Heart left ventricle (tissue), 16 donors: ENCODE measurements at regions of chr12 and their contacts with region 1.

Region 1: DNA sequence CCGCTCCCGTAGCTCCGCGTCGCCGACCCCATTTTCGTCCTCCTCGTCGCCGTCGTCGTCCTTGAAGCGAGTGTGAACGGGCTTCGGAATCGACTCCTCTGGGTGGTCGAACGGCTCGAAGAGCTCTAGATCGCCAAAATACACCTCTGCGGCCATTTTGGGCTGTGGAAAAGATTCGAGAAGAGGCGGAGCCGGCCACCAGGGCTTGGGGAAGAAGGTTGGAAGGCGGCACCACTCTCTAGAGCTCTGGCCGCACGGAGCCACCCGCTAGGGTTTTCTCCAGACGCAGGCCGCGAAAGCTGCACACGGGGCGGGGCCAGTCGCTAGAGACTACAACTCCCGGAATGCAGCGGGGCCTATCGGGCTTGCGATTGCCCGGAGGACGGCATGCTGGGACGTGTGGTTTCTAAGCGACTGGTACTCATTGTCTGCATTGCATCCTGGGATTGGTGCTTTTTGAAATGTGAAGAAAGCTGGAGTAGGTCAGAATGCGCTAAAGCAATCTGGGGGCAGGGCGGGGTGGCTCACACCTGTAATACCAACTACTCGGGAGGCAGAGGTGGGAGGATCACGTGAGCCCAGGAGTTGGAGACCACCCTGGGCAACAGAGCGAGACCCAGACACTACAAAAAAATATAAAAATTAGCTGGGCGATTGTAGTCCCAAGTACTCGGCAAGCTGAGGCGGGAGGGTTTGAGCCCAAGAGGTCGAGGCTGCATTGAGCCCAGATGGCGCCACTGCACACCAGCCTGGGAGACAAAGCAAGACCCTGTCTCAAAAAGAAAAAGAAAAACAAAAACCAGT is at the start of gene ZCCHC8:
- DNase-seq: peak; percentile 96 to 98 (median 97)
- ATAC-seq: peak; percentile 98 to 100 (median 98)
- H3K4me3 ChIP-seq: peak within 1 kb of the TSS; percentile 17 to 95 (median 78)
- H3K27ac ChIP-seq: peak within 1 kb of the TSS; percentile 84 to 100 (median 96)
- H3K4me1 ChIP-seq: peaks cover 0 to 36% (median 28%) of the 10 kb centered on the region in 12 donors
- H3K27me3 ChIP-seq: no peaks in the 10 kb centered on the region
- CTCF ChIP-seq: no peak
- POLR2A ChIP-seq: peak; percentile 67 to 94
- total RNA-seq, gene ZCCHC8: 6.4 to 14.3 (median 8.0) TPM

Region 2: DNA sequence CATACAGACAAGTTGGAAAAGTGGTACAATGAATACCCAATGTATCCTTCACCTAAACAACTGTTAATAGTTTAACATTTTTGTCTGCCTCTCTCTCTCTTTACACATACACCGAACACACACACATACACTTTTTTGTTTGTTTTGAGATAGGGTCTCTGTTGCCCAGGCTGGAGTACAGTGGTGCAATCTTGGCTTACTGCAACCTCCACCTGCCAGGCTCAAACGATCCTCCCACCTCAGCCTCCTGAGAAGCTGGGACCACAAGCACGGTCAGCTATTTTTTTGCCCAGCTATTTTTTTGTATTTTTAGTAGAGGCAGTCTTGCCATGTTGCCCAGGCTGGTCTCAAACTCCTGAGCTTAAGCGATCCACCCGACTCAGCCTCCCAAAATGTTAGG is 16.9 kb before region 1 on chr12:
- intact Hi-C with region 1: loop called in 1 of 10 experiments (anchors 2 kb)
- DNase-seq: no peak
- ATAC-seq: no peak
- H3K4me3 ChIP-seq: no peak overlapping the region
- H3K27ac ChIP-seq: no peak overlapping the region
- H3K4me1 ChIP-seq: no peaks in the 10 kb centered on the region
- H3K27me3 ChIP-seq: no peaks in the 10 kb centered on the region
- CTCF ChIP-seq: no peak
- POLR2A ChIP-seq: no peak

Region 3: GRCh38 chr12:122526683-122527477 is 26.0 kb after region 1 on chr12 and contains the starts of genes KNTC1 and RSRC2:
- intact Hi-C with region 1: loop called in 4 of 10 experiments (anchors 1 to 2 kb)
- DNase-seq: peak; percentile 96 to 99 (median 99)
- ATAC-seq: peak; percentile 96 to 99 (median 98)
- H3K4me3 ChIP-seq: peak within 1 kb of the TSS; percentile 56 to 92 (median 78)
- H3K27ac ChIP-seq: peak within 1 kb of the TSS; percentile 91 to 100 (median 98)
- H3K4me1 ChIP-seq: peaks cover 12 to 47% (median 41%) of the 10 kb centered on the region in 12 donors
- H3K27me3 ChIP-seq: no peaks in the 10 kb centered on the region
- CTCF ChIP-seq: no peak
- POLR2A ChIP-seq: peak in 1 of 2 donors; percentile 82
- total RNA-seq, gene KNTC1: 2.2 to 10.4 (median 2.9) TPM
- total RNA-seq, gene RSRC2: 31.1 to 46.5 (median 35.4) TPM